Mammary epithelial cell (primary cell): ENCODE measurements at regions of chr1 and their contacts with region 1.

Region 1: GRCh38 chr1:161905269-161905884 is 118.3 kb downstream of the OLFML2B start:
- DNase-seq: peak; percentile 35
- H3K4me3 ChIP-seq: no peak overlapping the region
- H3K27ac ChIP-seq: no peak overlapping the region
- H3K4me1 ChIP-seq: peaks cover 6% of the 10 kb centered on the region
- H3K27me3 ChIP-seq: no peaks in the 10 kb centered on the region
- CTCF ChIP-seq: peak; percentile 70 to 77

Region 2: GRCh38 chr1:161792740-161793139 is 112.6 kb before region 1 on chr1:
- CTCF ChIA-PET with region 1: no interaction called
- dilution Hi-C with region 1: no loop called
- in situ Hi-C with region 1: no loop called
- intact Hi-C with region 1: loop called (anchors 1 kb)
- DNase-seq: peak; percentile 79
- H3K4me3 ChIP-seq: no peak overlapping the region
- H3K27ac ChIP-seq: peak overlapping the region; percentile 16
- H3K4me1 ChIP-seq: peaks cover 12% of the 10 kb centered on the region
- H3K27me3 ChIP-seq: no peaks in the 10 kb centered on the region
- CTCF ChIP-seq: peak; percentile 44 to 56

Region 3: DNA sequence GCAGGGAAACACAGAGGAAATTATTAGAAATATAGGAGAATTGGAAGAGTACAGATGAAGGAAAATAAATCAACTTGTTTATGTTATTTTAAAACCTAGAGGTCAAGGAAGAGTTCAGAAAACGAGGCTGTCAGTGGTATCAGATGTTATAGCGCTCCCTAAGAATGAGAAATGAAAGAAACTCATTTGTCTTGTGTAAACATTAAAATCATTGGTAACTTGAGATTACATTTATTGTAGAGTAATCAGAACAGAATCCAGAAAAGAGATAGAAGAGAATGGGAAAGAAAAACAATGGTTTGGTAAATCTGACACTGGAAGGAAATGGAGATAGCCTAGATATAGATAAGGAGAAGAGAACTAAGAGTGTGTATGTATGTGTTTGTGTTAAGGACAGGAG is 32.9 kb before region 1 on chr1:
- CTCF ChIA-PET with region 1: no interaction called
- dilution Hi-C with region 1: no loop called
- in situ Hi-C with region 1: no loop called
- intact Hi-C with region 1: no loop called
- DNase-seq: no peak
- H3K4me3 ChIP-seq: no peak overlapping the region
- H3K27ac ChIP-seq: no peak overlapping the region
- H3K4me1 ChIP-seq: no peaks in the 10 kb centered on the region
- H3K27me3 ChIP-seq: no peaks in the 10 kb centered on the region
- CTCF ChIP-seq: no peak